GM23248 (cell line): ENCODE measurements at regions of chr20 and their contacts with region 1.

Region 1: DNA sequence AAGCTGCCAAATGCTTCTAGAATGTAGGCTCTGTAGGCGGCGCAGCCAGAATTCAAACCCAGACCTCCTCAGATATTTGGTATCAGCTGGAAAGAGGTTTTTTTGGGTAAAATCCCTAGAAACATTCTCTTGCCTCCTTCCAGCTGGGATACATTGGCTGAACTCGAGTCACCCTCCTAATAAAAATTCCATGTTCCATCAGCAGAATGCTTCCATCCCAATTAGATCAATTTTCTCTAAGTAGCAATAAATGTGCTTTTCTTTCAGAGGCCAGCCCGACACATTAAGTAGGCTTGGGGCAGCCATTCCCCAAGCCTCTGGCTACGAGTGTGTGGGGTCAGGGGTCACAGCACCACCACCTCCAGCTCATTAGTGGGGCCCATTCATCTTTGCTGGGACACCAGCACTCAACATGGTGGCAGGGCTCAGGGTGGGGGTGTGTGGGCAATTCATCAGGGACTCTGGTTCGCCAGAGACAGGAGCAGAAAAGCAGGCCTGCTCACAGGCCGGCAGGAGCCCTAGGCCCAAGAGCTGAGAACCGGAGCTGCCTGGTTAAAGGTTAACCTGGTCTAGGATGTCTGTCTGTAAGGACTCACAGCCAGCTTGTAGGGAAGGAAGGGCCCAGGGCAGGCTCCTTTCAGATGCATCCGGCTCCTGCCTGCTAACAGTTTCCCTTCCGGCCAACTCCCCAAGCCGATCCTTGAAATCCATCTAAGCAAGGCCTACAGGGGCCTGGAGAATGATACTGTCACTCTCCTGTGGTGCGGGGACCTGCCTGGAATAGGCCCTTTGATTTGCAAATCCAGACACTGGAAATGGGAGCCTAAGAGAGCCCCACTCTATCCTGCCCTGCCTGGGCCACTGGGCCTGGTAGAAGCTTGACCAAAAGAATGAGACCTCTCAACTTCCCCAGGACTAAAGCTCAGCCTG is 159.1 kb upstream of the TOP1 start:
- DNase-seq: no peak
- H3K4me3 ChIP-seq: no peak overlapping the region
- H3K27ac ChIP-seq: no peak overlapping the region
- H3K4me1 ChIP-seq: peaks cover 11% of the 10 kb centered on the region
- H3K27me3 ChIP-seq: no peaks in the 10 kb centered on the region

Region 2: GRCh38 chr20:40471261-40471629 is 398.2 kb before region 1 on chr20:
- in situ Hi-C with region 1: no loop called
- DNase-seq: peak; percentile 26
- H3K4me3 ChIP-seq: no peak overlapping the region
- H3K27ac ChIP-seq: no peak overlapping the region
- H3K4me1 ChIP-seq: no peaks in the 10 kb centered on the region
- H3K27me3 ChIP-seq: no peaks in the 10 kb centered on the region

Region 3: DNA sequence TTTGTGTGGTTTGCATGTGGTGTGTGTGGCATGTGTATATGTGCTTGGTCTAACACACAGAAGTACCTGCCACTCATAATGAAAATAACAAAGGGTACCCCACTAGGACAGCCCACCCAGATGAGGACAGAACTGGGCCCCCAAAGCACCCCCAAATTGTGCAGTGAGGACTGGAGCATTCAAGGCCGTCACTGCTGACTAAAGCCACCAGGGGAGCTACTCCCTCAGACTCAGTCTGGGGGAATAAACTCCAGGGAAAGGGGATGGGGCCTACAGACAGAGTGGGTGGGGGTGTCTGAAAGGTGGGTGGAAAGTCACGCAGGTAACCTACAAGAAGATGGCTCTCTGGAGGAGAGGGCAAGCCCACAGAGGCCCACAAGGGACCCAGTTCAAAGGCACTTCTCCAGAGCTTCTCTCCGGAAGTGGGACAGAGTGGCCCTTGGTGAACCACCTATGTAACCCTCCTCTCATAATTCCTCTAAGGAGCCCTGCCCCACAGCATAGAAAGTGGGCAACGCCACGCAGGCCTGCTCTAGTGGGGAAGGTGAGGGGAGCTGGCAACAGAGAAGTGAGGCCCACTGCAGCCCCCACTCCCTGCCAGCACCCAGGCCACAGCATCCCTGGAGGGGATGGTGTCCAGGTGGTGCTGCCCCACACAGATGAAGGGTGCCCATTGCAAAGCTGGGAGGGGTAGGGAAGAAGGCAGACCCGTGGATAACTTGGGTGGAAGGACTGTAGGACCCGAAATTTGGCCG is 57.6 kb before region 1 on chr20:
- in situ Hi-C with region 1: loop called (anchors 10 kb)
- DNase-seq: no peak
- H3K4me3 ChIP-seq: no peak overlapping the region
- H3K27ac ChIP-seq: no peak overlapping the region
- H3K4me1 ChIP-seq: no peaks in the 10 kb centered on the region
- H3K27me3 ChIP-seq: 0 out of 2 replicates have a peak, but pooled peaks cover 6% of the 10 kb centered on the region

Region 4: DNA sequence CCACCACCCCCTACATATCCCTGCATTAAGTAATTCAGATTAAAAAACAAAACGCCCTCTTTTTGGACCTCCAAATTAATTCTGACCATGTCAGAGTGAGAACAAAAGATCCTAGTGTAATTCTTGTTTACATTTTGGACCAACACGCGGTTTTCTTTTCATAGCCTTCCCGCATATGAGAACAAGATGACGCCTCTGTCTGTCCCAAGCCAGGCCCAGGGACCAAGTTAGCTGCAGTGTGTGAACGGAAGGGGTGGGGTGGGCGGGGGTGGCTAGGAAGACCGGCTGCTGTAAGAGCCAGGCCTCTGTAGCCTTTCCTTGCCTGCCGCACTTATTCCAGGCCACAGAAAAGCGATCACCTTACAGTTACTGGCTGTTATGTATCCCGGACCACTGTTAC is 335.8 kb after region 1 on chr20:
- in situ Hi-C with region 1: no loop called
- DNase-seq: no peak
- H3K4me3 ChIP-seq: no peak overlapping the region
- H3K27ac ChIP-seq: no peak overlapping the region
- H3K4me1 ChIP-seq: no peaks in the 10 kb centered on the region
- H3K27me3 ChIP-seq: no peaks in the 10 kb centered on the region